ENCODE measurements at regions of chrX and their contacts with region 1.

Region 1: GRCh38 chrX:136626237-136626636 is 21.7 kb upstream of the CD40LG start:
- DNase-seq: no peak
- H3K4me3 Mint-ChIP-seq: peak overlapping the region; percentile 10
- H3K27ac Mint-ChIP-seq: peak overlapping the region; percentile 95
- H3K4me1 Mint-ChIP-seq: peaks cover 99% of the 10 kb centered on the region
- H3K27me3 Mint-ChIP-seq: no peaks in the 10 kb centered on the region

Region 2: DNA sequence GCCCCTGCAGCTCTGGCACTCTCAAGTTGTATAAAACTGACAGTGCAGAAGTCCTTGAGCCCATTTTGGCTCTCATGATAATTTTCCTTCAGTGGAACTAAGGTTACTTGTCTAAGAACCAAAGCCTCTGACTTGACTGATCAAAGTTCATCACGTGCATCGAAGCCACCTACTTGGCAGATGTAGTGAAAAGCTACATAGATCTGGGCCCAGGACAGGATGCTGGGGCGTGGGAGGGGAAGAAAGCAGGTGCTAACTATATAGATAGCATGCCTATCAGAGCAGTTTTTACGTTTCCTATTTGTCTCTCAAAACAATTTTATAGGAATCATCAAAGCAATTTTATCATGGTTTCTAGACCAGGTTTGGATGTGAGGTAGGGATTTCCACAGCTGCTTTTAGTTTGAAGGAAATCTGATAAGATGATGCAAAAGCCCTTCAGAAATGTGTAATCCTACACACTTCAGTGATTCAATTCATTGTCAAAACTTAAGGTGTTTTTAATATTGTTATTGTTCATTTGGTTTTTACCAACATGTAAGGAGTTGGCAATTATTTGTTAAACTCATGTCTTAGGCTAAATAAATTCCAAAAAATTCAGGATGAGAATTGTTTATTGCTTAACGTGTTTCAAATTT is 20.5 kb after region 1 on chrX:
- CTCF ChIA-PET with region 1: interaction called, 6 read pairs
- POLR2A ChIA-PET with region 1: interaction called, 90 read pairs
- DNase-seq: peak; percentile 61
- H3K4me3 Mint-ChIP-seq: peak overlapping the region; percentile 96
- H3K27ac Mint-ChIP-seq: peak overlapping the region; percentile 91
- H3K4me1 Mint-ChIP-seq: peaks cover 57% of the 10 kb centered on the region
- H3K27me3 Mint-ChIP-seq: no peaks in the 10 kb centered on the region

Region 3: DNA sequence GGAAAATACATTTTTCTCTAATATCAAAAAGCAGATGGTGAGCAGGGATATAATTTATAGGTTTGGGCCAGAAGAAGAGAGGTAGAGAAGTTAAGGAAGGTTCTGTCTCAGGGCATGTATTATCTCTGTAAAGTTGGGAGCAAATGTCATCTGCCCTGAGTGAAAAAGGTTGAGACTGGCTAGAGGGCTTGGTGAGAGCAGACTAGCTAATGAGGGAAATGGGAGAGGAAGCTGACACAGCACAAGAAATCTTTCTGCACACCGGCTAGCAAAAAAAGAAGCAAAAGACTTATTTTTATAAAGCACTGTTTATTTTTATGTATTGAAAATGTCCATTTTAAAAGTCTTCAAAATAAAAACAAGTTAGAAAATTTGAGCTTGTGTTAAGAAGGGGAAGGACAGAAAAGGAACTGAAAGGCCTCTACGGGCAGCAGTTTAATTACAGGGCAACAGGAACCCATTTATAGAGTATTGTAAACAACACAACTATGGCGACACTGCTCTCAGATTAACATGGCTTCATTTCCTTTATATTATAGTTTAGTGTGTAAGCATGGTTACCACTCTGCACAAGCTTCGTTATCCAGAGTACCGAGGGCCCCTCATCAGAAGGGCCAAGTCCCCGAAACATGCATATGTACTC is 39.1 kb after region 1 on chrX:
- CTCF ChIA-PET with region 1: no interaction called
- POLR2A ChIA-PET with region 1: interaction called, 48 read pairs
- DNase-seq: no peak
- H3K4me3 Mint-ChIP-seq: peak overlapping the region; percentile 44
- H3K27ac Mint-ChIP-seq: peak overlapping the region; percentile 84
- H3K4me1 Mint-ChIP-seq: peaks cover 83% of the 10 kb centered on the region
- H3K27me3 Mint-ChIP-seq: no peaks in the 10 kb centered on the region

Region 4: GRCh38 chrX:136694431-136695087 is 68.3 kb after region 1 on chrX:
- CTCF ChIA-PET with region 1: no interaction called
- POLR2A ChIA-PET with region 1: no interaction called
- DNase-seq: peak; percentile 28
- H3K4me3 Mint-ChIP-seq: peak overlapping the region; percentile 71
- H3K27ac Mint-ChIP-seq: peak overlapping the region; percentile 98
- H3K4me1 Mint-ChIP-seq: peaks cover 82% of the 10 kb centered on the region
- H3K27me3 Mint-ChIP-seq: no peaks in the 10 kb centered on the region